ENCODE measurements at regions of chr11 and their contacts with region 1.

Region 1: DNA sequence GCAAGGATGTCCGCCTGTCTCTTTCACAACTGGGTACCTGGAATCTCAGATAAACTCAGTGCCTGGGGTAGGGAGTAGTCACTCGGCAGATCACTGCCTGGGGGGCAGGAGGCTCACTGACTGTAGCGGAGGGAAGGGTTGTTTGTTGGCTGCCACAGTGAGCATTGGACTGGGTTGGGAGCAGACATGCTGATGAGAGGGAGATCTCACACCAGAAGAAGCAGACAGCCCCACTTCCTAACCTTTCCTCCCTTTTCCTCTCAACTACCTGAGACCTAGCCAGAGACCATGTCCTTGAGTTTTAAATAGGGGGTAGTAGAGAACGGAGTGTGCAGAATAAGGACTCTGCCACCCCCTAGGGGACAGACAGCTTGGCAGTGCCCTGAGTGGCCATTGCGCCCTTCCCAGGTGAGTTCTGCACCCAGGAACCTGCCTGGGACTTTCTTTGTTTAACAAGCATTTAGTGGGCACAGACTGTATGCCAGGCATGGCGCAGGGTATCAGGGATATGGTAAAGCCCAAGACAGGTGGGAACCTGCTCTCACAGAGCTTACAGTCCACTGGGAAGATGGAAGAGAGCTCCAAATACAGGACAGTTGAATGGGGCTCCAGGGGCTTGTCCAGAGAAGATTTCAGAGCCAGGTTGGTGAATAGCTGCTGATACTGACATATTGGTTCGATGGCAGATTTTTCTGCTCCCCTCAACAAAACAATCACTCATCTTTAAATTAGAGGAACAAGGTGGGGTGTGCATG is 115.7 kb upstream of the NNMT start:
- DNase-seq: peak in 1 of 2 donors; percentile 53
- ATAC-seq: no peak
- H3K4me3 ChIP-seq: no peak overlapping the region
- H3K4me3 Mint-ChIP-seq: peak overlapping the region; percentile 35
- H3K27ac ChIP-seq: no peak overlapping the region
- H3K27ac Mint-ChIP-seq: peak overlapping the region; percentile 85 to 87
- H3K4me1 ChIP-seq: peaks cover 76% of the 10 kb centered on the region
- H3K4me1 Mint-ChIP-seq: peaks cover 93 to 96% of the 10 kb centered on the region in 2 donors
- H3K27me3 ChIP-seq: no peaks in the 10 kb centered on the region
- H3K27me3 Mint-ChIP-seq: no peaks in the 10 kb centered on the region
- CTCF ChIP-seq: peak; percentile 44

Region 2: GRCh38 chr11:114085965-114086793 is 94.3 kb before region 1 on chr11:
- intact Hi-C with region 1: no loop called
- DNase-seq: no peak
- ATAC-seq: no peak
- H3K4me3 ChIP-seq: no peak overlapping the region
- H3K4me3 Mint-ChIP-seq: peak overlapping the region; percentile 60
- H3K27ac ChIP-seq: peak overlapping the region; percentile 56
- H3K27ac Mint-ChIP-seq: peak overlapping the region; percentile 89 to 100
- H3K4me1 ChIP-seq: peaks cover 98% of the 10 kb centered on the region
- H3K4me1 Mint-ChIP-seq: peaks cover 99% of the 10 kb centered on the region in 2 donors
- H3K27me3 ChIP-seq: no peaks in the 10 kb centered on the region
- H3K27me3 Mint-ChIP-seq: no peaks in the 10 kb centered on the region
- CTCF ChIP-seq: no peak

Region 3: GRCh38 chr11:114148013-114148382 is 32.5 kb before region 1 on chr11:
- intact Hi-C with region 1: loop called (anchors 5 kb)
- DNase-seq: no peak
- ATAC-seq: peak; percentile 8 to 18 (median 11)
- H3K4me3 ChIP-seq: no peak overlapping the region
- H3K4me3 Mint-ChIP-seq: peak overlapping the region; percentile 82
- H3K27ac ChIP-seq: no peak overlapping the region
- H3K27ac Mint-ChIP-seq: peak overlapping the region; percentile 69 to 85
- H3K4me1 ChIP-seq: peaks cover 61% of the 10 kb centered on the region
- H3K4me1 Mint-ChIP-seq: peaks cover 89 to 93% of the 10 kb centered on the region in 2 donors
- H3K27me3 ChIP-seq: no peaks in the 10 kb centered on the region
- H3K27me3 Mint-ChIP-seq: no peaks in the 10 kb centered on the region
- CTCF ChIP-seq: no peak

Region 4: GRCh38 chr11:114159802-114160632 is 20.5 kb before region 1 on chr11:
- intact Hi-C with region 1: loop called (anchors 1 kb)
- DNase-seq: peak; percentile 98 to 99
- ATAC-seq: peak; percentile 92 to 97 (median 95)
- H3K4me3 ChIP-seq: peak overlapping the region; percentile 8
- H3K4me3 Mint-ChIP-seq: peak overlapping the region; percentile 86
- H3K27ac ChIP-seq: peak overlapping the region; percentile 73
- H3K27ac Mint-ChIP-seq: peak overlapping the region; percentile 85 to 92
- H3K4me1 ChIP-seq: peaks cover 94% of the 10 kb centered on the region
- H3K4me1 Mint-ChIP-seq: peaks cover 96 to 98% of the 10 kb centered on the region in 2 donors
- H3K27me3 ChIP-seq: no peaks in the 10 kb centered on the region
- H3K27me3 Mint-ChIP-seq: no peaks in the 10 kb centered on the region
- CTCF ChIP-seq: no peak

Region 5: DNA sequence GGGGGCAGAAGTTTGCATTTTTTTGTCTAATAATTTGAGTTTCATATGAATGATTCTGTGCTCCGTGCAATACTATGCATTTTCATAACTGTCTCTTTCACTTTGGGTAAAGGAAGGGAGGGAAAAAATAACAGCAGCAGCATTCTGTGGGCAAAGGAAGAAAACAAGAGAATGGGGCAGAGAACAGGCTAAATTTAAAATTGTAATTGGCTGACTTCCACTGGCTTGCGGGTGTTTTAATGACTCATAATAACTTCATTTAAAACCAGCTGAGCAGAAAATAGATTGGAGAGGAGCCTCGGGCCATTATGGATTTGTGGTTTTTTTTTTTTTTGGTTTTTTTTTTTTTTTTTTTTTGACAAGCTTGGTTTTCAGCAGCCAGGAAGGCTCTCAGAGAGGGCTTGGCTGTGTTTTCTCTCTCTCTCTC is 13.6 kb before region 1 on chr11:
- intact Hi-C with region 1: loop called (anchors 2 kb)
- DNase-seq: peak in 1 of 2 donors; percentile 65
- ATAC-seq: peak in 2 of 3 donors; percentile 50 to 57
- H3K4me3 ChIP-seq: no peak overlapping the region
- H3K4me3 Mint-ChIP-seq: peak overlapping the region; percentile 73
- H3K27ac ChIP-seq: peak overlapping the region; percentile 44
- H3K27ac Mint-ChIP-seq: peak overlapping the region; percentile 61 to 85
- H3K4me1 ChIP-seq: peaks cover 93% of the 10 kb centered on the region
- H3K4me1 Mint-ChIP-seq: peaks cover 97 to 99% of the 10 kb centered on the region in 2 donors
- H3K27me3 ChIP-seq: no peaks in the 10 kb centered on the region
- H3K27me3 Mint-ChIP-seq: no peaks in the 10 kb centered on the region
- CTCF ChIP-seq: no peak